ENCODE measurements at regions of chr18 and their contacts with region 1.

Region 1: GRCh38 chr18:27040796-27041195 is 144.3 kb downstream of the CHST9 start:
- DNase-seq: no peak
- H3K4me3 ChIP-seq: no peak overlapping the region
- H3K27ac ChIP-seq: no peak overlapping the region
- H3K4me1 ChIP-seq: no peaks in the 10 kb centered on the region
- H3K27me3 ChIP-seq: no peaks in the 10 kb centered on the region
- CTCF ChIP-seq: no peak
- POLR2A ChIP-seq: no peak

Region 2: GRCh38 chr18:26630596-26630995 is 410.2 kb before region 1 on chr18:
- intact Hi-C with region 1: no loop called
- DNase-seq: no peak
- H3K4me3 ChIP-seq: no peak overlapping the region
- H3K27ac ChIP-seq: no peak overlapping the region
- H3K4me1 ChIP-seq: no peaks in the 10 kb centered on the region
- H3K27me3 ChIP-seq: no peaks in the 10 kb centered on the region
- CTCF ChIP-seq: no peak
- POLR2A ChIP-seq: no peak

Region 3: GRCh38 chr18:27109451-27109850 is 68.7 kb after region 1 on chr18:
- intact Hi-C with region 1: no loop called
- DNase-seq: no peak
- H3K4me3 ChIP-seq: no peak overlapping the region
- H3K27ac ChIP-seq: no peak overlapping the region
- H3K4me1 ChIP-seq: no peaks in the 10 kb centered on the region
- H3K27me3 ChIP-seq: no peaks in the 10 kb centered on the region
- CTCF ChIP-seq: no peak
- POLR2A ChIP-seq: no peak

Region 4: DNA sequence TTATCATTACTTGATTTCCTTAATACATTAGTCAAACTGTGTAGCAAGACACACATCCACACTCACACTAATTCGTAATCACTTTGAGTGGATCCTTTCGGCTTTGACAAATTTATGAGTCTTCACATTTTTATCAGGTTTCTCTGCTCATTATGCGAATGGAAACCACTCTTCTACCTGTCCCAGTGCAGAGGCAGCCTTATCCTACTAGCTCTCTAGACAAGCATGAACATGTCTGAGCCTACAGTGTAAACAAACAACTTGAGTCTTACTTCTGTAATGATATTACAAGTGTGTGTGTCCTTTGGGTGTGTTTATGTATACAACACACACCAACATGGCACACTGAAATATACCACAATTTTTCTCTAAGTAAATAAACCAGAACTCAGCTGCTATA is 506.2 kb after region 1 on chr18:
- intact Hi-C with region 1: loop called (anchors 5 kb)
- DNase-seq: no peak
- H3K4me3 ChIP-seq: no peak overlapping the region
- H3K27ac ChIP-seq: no peak overlapping the region
- H3K4me1 ChIP-seq: no peaks in the 10 kb centered on the region
- H3K27me3 ChIP-seq: no peaks in the 10 kb centered on the region
- CTCF ChIP-seq: no peak
- POLR2A ChIP-seq: no peak

Region 5: DNA sequence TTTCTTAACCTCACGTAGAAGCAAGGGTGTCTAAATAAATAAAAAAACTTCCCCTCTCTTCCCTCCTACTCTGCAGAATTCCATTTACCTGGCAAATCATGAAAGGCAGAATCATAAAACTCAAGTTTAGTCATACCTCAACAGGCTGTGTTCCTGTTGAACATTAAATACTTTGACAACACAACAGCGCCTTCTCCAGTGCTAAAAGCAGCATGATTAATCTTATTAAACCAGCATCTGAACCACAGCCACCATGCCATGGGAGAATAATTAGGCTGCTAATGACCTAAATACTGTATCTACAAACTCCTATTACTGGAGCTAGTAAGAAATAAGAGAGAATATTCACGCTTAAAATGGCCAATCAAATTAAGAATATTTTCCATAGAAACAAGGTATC is 1068.0 kb after region 1 on chr18:
- intact Hi-C with region 1: no loop called
- DNase-seq: no peak
- H3K4me3 ChIP-seq: no peak overlapping the region
- H3K27ac ChIP-seq: no peak overlapping the region
- H3K4me1 ChIP-seq: no peaks in the 10 kb centered on the region
- H3K27me3 ChIP-seq: no peaks in the 10 kb centered on the region
- CTCF ChIP-seq: no peak
- POLR2A ChIP-seq: no peak